ENCODE measurements at regions of chr11 and their contacts with region 1.

Region 1: GRCh38 chr11:16605894-16606783 is 132.3 kb upstream of the C11orf58 start:
- DNase-seq: peak; percentile 92
- H3K4me3 ChIP-seq: peak overlapping the region; percentile 64 to 75 (median 65)
- H3K27ac ChIP-seq: no peak overlapping the region
- H3K4me1 ChIP-seq: peaks cover 33% of the 10 kb centered on the region
- H3K27me3 ChIP-seq: peaks cover 32% of the 10 kb centered on the region
- CTCF ChIP-seq: peak; percentile 90 to 93

Region 2: GRCh38 chr11:15793043-15793996 is 812.8 kb before region 1 on chr11:
- CTCF ChIA-PET with region 1: no interaction called
- dilution Hi-C with region 1: no loop called
- in situ Hi-C with region 1: loop called in 1 of 2 experiments (anchors 25 kb)
- intact Hi-C with region 1: no loop called
- DNase-seq: peak; percentile 87
- H3K4me3 ChIP-seq: no peak overlapping the region
- H3K27ac ChIP-seq: peak overlapping the region; percentile 95
- H3K4me1 ChIP-seq: peaks cover 13% of the 10 kb centered on the region
- H3K27me3 ChIP-seq: no peaks in the 10 kb centered on the region
- CTCF ChIP-seq: no peak

Region 3: DNA sequence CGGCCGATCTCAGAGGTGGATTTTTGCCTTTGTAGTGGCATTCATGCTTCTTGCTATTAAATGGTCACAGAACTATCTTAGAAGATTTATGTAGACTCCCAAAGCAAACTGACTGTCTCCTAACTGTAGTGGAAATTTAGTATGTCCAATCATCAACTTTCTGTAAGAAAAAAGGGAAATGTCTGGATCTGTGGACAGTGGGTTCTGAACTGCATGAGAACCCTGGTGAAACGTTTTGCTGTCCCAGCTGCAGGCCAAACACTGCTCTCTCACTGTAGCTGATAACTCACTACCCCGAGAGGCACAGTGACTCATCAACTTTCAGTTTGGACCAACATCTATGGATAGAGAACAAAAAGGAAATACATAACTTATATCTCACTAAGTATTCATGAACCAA is 636.9 kb before region 1 on chr11:
- CTCF ChIA-PET with region 1: no interaction called
- dilution Hi-C with region 1: no loop called
- in situ Hi-C with region 1: no loop called
- intact Hi-C with region 1: loop called (anchors 2 kb)
- DNase-seq: peak; percentile 87
- H3K4me3 ChIP-seq: peak overlapping the region in 2 of 3 experiments; percentile 7 to 27
- H3K27ac ChIP-seq: peak overlapping the region; percentile 99
- H3K4me1 ChIP-seq: peaks cover 57% of the 10 kb centered on the region
- H3K27me3 ChIP-seq: no peaks in the 10 kb centered on the region
- CTCF ChIP-seq: no peak

Region 4: DNA sequence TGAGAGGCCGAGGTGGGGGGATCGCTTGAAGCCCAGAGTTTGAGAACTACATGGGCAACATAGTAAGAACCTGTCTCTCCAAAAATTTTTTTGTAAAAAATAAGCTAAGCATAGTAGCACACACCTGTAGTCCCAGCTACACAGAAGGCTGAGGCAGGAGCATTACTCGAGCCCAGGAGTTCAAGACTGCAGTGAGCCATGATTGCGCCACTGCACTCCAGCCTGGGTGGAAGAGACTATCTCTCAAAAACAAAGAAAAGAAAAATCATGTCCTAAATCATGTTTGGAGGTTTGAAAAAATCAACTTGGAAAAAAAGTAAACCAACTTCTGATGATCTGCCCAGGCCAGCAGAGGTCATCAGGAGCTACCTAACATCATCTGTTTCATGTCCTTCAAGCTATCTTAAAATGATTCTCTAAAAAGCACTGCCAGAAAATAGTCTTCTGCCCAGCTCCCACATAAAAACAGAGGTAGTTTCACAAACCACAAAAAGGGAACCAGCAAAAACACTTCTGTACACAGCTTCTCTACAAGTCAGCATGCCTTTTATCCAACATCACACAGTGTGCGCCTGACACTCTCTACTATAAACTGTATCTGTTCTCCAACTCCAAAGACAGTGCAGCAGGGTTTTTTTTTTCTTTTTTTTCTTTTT is 414.8 kb before region 1 on chr11:
- CTCF ChIA-PET with region 1: no interaction called
- dilution Hi-C with region 1: no loop called
- in situ Hi-C with region 1: no loop called
- intact Hi-C with region 1: loop called (anchors 5 kb)
- DNase-seq: no peak
- H3K4me3 ChIP-seq: no peak overlapping the region
- H3K27ac ChIP-seq: no peak overlapping the region
- H3K4me1 ChIP-seq: no peaks in the 10 kb centered on the region
- H3K27me3 ChIP-seq: peaks cover 1% of the 10 kb centered on the region
- CTCF ChIP-seq: peak in 1 of 2 donors; percentile 3

Region 5: DNA sequence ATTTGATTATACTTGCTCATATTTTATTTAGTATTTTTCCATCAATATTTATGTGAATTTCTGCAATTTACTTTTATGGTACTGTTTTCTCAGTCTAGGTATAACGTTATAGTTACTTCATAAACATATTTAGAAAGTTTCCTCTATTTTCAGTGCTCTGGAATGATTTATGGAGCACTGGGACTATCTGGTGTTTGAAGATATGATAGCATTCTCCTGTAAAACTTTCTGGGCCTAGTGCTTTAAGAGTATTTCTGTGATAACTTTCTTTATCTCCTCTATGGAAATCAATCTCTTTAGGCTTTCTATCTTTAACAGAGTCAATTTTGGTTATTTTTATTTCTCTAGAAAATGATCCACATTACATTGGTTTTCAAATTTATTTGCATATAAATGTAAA is 334.9 kb before region 1 on chr11:
- CTCF ChIA-PET with region 1: no interaction called
- dilution Hi-C with region 1: no loop called
- in situ Hi-C with region 1: no loop called
- intact Hi-C with region 1: loop called (anchors 5 kb)
- DNase-seq: no peak
- H3K4me3 ChIP-seq: no peak overlapping the region
- H3K27ac ChIP-seq: no peak overlapping the region
- H3K4me1 ChIP-seq: no peaks in the 10 kb centered on the region
- H3K27me3 ChIP-seq: no peaks in the 10 kb centered on the region
- CTCF ChIP-seq: peak in 1 of 2 donors; percentile 17

Region 6: DNA sequence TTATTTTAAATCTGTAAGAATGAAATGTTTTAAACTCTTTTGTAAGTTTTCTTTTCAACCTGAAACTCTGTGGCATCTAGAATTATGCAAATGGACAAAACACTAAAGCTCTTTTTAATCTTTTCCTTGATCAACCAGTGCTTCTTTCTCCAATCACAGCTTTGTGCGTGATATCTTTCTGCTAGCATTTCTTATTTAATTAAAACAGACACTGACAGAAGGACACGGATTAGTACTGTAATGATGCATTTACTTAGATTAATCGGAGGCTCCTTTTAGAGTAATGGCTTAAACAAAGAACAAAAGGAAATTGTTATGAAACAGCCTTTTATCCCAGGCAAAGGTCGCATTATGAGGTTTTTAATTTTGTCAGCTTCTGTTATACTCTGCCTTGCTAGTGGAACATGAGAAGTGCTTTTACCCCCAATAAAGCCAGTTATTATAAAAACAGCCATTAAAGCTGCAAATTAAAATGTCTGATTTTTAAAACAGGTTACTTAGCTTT is 201.3 kb before region 1 on chr11:
- CTCF ChIA-PET with region 1: no interaction called
- dilution Hi-C with region 1: no loop called
- in situ Hi-C with region 1: no loop called
- intact Hi-C with region 1: loop called (anchors 5 kb)
- DNase-seq: no peak
- H3K4me3 ChIP-seq: no peak overlapping the region
- H3K27ac ChIP-seq: no peak overlapping the region
- H3K4me1 ChIP-seq: no peaks in the 10 kb centered on the region
- H3K27me3 ChIP-seq: peaks cover 2% of the 10 kb centered on the region
- CTCF ChIP-seq: no peak

Region 7: GRCh38 chr11:16511116-16512114 is 94.7 kb before region 1 on chr11:
- CTCF ChIA-PET with region 1: no interaction called
- dilution Hi-C with region 1: no loop called
- in situ Hi-C with region 1: no loop called
- intact Hi-C with region 1: loop called (anchors 2 kb)
- DNase-seq: peak; percentile 88
- H3K4me3 ChIP-seq: no peak overlapping the region
- H3K27ac ChIP-seq: no peak overlapping the region
- H3K4me1 ChIP-seq: no peaks in the 10 kb centered on the region
- H3K27me3 ChIP-seq: no peaks in the 10 kb centered on the region
- CTCF ChIP-seq: no peak

Measured in mammary epithelial cell (primary cell).